B cell (primary cell): ENCODE measurements at regions of chr16 and their contacts with region 1.

Region 1: GRCh38 chr16:67935402-67936123 is 1.1 kb downstream of the PSMB10 start:
- DNase-seq: peak; percentile 95
- ATAC-seq: peak; percentile 89
- H3K4me3 ChIP-seq: peak overlapping the region; percentile 77 to 96 (median 93)
- H3K4me3 Mint-ChIP-seq: peak overlapping the region; percentile 100
- H3K27ac ChIP-seq: peak overlapping the region; percentile 67 to 85
- H3K27ac Mint-ChIP-seq: peak overlapping the region; percentile 99
- H3K4me1 ChIP-seq: peaks cover 25 to 38% of the 10 kb centered on the region in 2 donors
- H3K4me1 Mint-ChIP-seq: peaks cover 31% of the 10 kb centered on the region
- H3K27me3 ChIP-seq: no peaks in the 10 kb centered on the region
- H3K27me3 Mint-ChIP-seq: no peaks in the 10 kb centered on the region
- CTCF ChIP-seq: no peak

Region 2: GRCh38 chr16:67490335-67491096 is 445.0 kb before region 1 on chr16:
- CTCF ChIA-PET with region 1: no interaction called
- POLR2A ChIA-PET with region 1: interaction called, 3 read pairs
- intact Hi-C with region 1: loop called (anchors 5 kb)
- DNase-seq: no peak
- ATAC-seq: no peak
- H3K4me3 ChIP-seq: no peak overlapping the region
- H3K4me3 Mint-ChIP-seq: peak overlapping the region; percentile 51
- H3K27ac ChIP-seq: peak overlapping the region; percentile 70 to 89
- H3K27ac Mint-ChIP-seq: peak overlapping the region; percentile 82
- H3K4me1 ChIP-seq: peaks cover 73 to 84% of the 10 kb centered on the region in 2 donors
- H3K4me1 Mint-ChIP-seq: peaks cover 71% of the 10 kb centered on the region
- H3K27me3 ChIP-seq: no peaks in the 10 kb centered on the region
- H3K27me3 Mint-ChIP-seq: no peaks in the 10 kb centered on the region
- CTCF ChIP-seq: no peak

Region 3: GRCh38 chr16:67806428-67807147 is 129.0 kb before region 1 on chr16 and contains the starts of genes RANBP10 and TSNAXIP1:
- CTCF ChIA-PET with region 1: no interaction called
- POLR2A ChIA-PET with region 1: interaction called, 3 read pairs
- intact Hi-C with region 1: loop called (anchors 1 kb)
- DNase-seq: peak; percentile 98
- ATAC-seq: peak; percentile 89
- H3K4me3 ChIP-seq: peak within 1 kb of the TSS; percentile 89 to 99 (median 92)
- H3K4me3 Mint-ChIP-seq: peak within 1 kb of the TSS; percentile 97
- H3K27ac ChIP-seq: peak within 1 kb of the TSS; percentile 78 to 80
- H3K27ac Mint-ChIP-seq: peak within 1 kb of the TSS; percentile 94
- H3K4me1 ChIP-seq: peaks cover 40 to 51% of the 10 kb centered on the region in 2 donors
- H3K4me1 Mint-ChIP-seq: peaks cover 45% of the 10 kb centered on the region
- H3K27me3 ChIP-seq: no peaks in the 10 kb centered on the region
- H3K27me3 Mint-ChIP-seq: no peaks in the 10 kb centered on the region
- CTCF ChIP-seq: no peak
- total RNA-seq, gene RANBP10: 32.2 and 33.1 TPM in 2 replicates
- total RNA-seq, gene TSNAXIP1: 1.1 and 1.2 TPM in 2 replicates

Region 4: GRCh38 chr16:67872786-67873537 is 62.6 kb before region 1 on chr16 and contains the start of gene EDC4:
- CTCF ChIA-PET with region 1: interaction called, 3 read pairs
- POLR2A ChIA-PET with region 1: interaction called, 4 read pairs
- intact Hi-C with region 1: loop called (anchors 2 kb)
- DNase-seq: peak; percentile 90
- ATAC-seq: peak; percentile 90
- H3K4me3 ChIP-seq: peak within 1 kb of the TSS; percentile 59 to 98 (median 88)
- H3K4me3 Mint-ChIP-seq: peak within 1 kb of the TSS; percentile 91
- H3K27ac ChIP-seq: peak within 1 kb of the TSS; percentile 74 to 81
- H3K27ac Mint-ChIP-seq: peak within 1 kb of the TSS; percentile 90
- H3K4me1 ChIP-seq: peaks cover 23 to 25% of the 10 kb centered on the region in 2 donors
- H3K4me1 Mint-ChIP-seq: peaks cover 37% of the 10 kb centered on the region
- H3K27me3 ChIP-seq: no peaks in the 10 kb centered on the region
- H3K27me3 Mint-ChIP-seq: no peaks in the 10 kb centered on the region
- CTCF ChIP-seq: no peak
- total RNA-seq, gene EDC4: 83.3 and 95.1 TPM in 2 replicates

Region 5: GRCh38 chr16:67968400-67969253 is 33.1 kb after region 1 on chr16 and contains the start of gene SLC12A4:
- CTCF ChIA-PET with region 1: interaction called, 11 read pairs
- POLR2A ChIA-PET with region 1: interaction called, 8 read pairs
- intact Hi-C with region 1: loop called (anchors 1 kb)
- DNase-seq: peak; percentile 83
- ATAC-seq: peak; percentile 92
- H3K4me3 ChIP-seq: peak within 1 kb of the TSS; percentile 22 to 95 (median 80)
- H3K4me3 Mint-ChIP-seq: peak within 1 kb of the TSS; percentile 88
- H3K27ac ChIP-seq: peak within 1 kb of the TSS; percentile 10 to 63
- H3K27ac Mint-ChIP-seq: peak within 1 kb of the TSS; percentile 91
- H3K4me1 ChIP-seq: peaks cover 10 to 19% of the 10 kb centered on the region in 2 donors
- H3K4me1 Mint-ChIP-seq: peaks cover 20% of the 10 kb centered on the region
- H3K27me3 ChIP-seq: no peaks in the 10 kb centered on the region
- H3K27me3 Mint-ChIP-seq: no peaks in the 10 kb centered on the region
- CTCF ChIP-seq: no peak
- total RNA-seq, gene SLC12A4: 42.2 and 43.8 TPM in 2 replicates

Region 6: GRCh38 chr16:68040507-68041288 is 105.1 kb after region 1 on chr16:
- CTCF ChIA-PET with region 1: interaction called, 29 read pairs
- POLR2A ChIA-PET with region 1: interaction called, 8 read pairs
- intact Hi-C with region 1: loop called (anchors 1 kb)
- DNase-seq: peak; percentile 90
- ATAC-seq: peak; percentile 82
- H3K4me3 ChIP-seq: peak overlapping the region in 4 of 5 experiments; percentile 34 to 79 (median 52)
- H3K4me3 Mint-ChIP-seq: peak overlapping the region; percentile 85
- H3K27ac ChIP-seq: peak overlapping the region; percentile 14 to 82
- H3K27ac Mint-ChIP-seq: peak overlapping the region; percentile 94
- H3K4me1 ChIP-seq: peaks cover 46 to 56% of the 10 kb centered on the region in 2 donors
- H3K4me1 Mint-ChIP-seq: peaks cover 51% of the 10 kb centered on the region
- H3K27me3 ChIP-seq: no peaks in the 10 kb centered on the region
- H3K27me3 Mint-ChIP-seq: no peaks in the 10 kb centered on the region
- CTCF ChIP-seq: peak; percentile 84